ENCODE measurements at regions of chr9 and their contacts with region 1.

Region 1: GRCh38 chr9:71768388-71769174 is at the start of gene CEMIP2:
- DNase-seq: peak; percentile 91
- ATAC-seq: peak; percentile 78
- H3K4me3 Mint-ChIP-seq: peak within 1 kb of the TSS; percentile 98
- H3K27ac Mint-ChIP-seq: peak within 1 kb of the TSS; percentile 96
- H3K4me1 Mint-ChIP-seq: peaks cover 34% of the 10 kb centered on the region
- H3K27me3 Mint-ChIP-seq: no peaks in the 10 kb centered on the region
- CTCF ChIP-seq: no peak
- total RNA-seq, gene CEMIP2: 58.7 to 63.5 TPM

Region 2: GRCh38 chr9:71270554-71270953 is 498.0 kb before region 1 on chr9:
- CTCF ChIA-PET with region 1: no interaction called
- POLR2A ChIA-PET with region 1: no interaction called
- intact Hi-C with region 1: no loop called
- DNase-seq: no peak
- ATAC-seq: no peak
- H3K4me3 Mint-ChIP-seq: no peak overlapping the region
- H3K27ac Mint-ChIP-seq: no peak overlapping the region
- H3K4me1 Mint-ChIP-seq: no peaks in the 10 kb centered on the region
- H3K27me3 Mint-ChIP-seq: peaks cover 1% of the 10 kb centered on the region
- CTCF ChIP-seq: no peak

Region 3: DNA sequence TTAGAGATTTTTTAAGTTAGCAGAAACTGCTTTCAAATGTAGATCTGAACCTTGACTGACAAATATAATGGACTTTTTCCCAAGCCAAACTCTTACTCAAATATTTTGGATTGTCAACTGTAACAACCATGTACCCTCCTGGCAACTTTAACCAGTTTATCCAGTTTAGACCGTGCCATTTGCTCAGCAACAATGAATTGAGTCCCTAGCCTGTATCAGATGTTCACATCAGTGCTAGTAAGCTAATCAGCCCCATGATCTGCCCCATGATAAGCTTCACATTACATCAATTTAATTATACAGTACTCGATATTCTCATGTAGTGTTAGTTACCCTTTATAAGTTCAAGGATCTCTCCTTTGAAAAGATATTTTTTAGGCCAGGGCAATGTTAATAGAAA is 370.7 kb before region 1 on chr9:
- CTCF ChIA-PET with region 1: no interaction called
- POLR2A ChIA-PET with region 1: no interaction called
- intact Hi-C with region 1: no loop called
- DNase-seq: no peak
- ATAC-seq: no peak
- H3K4me3 Mint-ChIP-seq: no peak overlapping the region
- H3K27ac Mint-ChIP-seq: no peak overlapping the region
- H3K4me1 Mint-ChIP-seq: no peaks in the 10 kb centered on the region
- H3K27me3 Mint-ChIP-seq: peaks cover 1% of the 10 kb centered on the region
- CTCF ChIP-seq: no peak

Region 4: DNA sequence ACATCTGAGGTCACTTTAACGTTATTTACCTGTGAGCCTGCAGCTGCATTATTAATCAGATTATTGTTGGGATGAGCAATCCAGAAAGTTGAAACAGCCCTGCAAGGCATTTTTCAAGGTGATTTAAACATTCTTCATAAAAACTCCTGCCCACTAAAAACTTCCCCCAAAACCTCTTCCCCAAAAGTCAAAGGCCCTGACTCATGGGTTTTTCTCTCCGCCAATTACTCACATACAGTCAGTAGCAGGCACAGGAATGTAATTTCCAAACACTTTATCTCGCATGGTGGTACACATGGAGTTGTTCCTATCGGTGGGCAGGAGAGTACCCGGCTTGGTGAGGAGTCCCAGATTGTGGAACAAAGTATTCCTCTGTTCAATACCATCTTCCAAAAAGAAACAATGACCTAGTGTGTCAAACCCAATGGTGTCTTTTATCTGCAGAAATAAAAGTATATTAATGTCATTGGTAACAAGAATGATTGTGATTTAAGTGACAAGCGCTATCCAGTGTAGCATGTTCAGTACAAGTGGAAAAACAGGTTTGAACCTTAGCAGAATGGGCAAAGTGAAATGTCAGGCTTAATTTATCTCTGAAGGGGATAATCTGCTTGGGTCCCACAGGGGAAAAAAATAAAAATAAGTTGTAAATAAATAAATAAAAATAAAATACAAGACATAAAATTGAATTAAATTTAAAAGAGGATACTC is 38.6 kb before region 1 on chr9:
- CTCF ChIA-PET with region 1: interaction called, 5 read pairs
- POLR2A ChIA-PET with region 1: no interaction called
- intact Hi-C with region 1: loop called (anchors 5 kb)
- DNase-seq: no peak
- ATAC-seq: no peak
- H3K4me3 Mint-ChIP-seq: no peak overlapping the region
- H3K27ac Mint-ChIP-seq: no peak overlapping the region
- H3K4me1 Mint-ChIP-seq: peaks cover 4% of the 10 kb centered on the region
- H3K27me3 Mint-ChIP-seq: no peaks in the 10 kb centered on the region
- CTCF ChIP-seq: no peak

Region 5: GRCh38 chr9:71783120-71783530 is 14.5 kb after region 1 on chr9:
- CTCF ChIA-PET with region 1: interaction called, 19 read pairs
- POLR2A ChIA-PET with region 1: interaction called, 69 read pairs
- intact Hi-C with region 1: no loop called
- DNase-seq: peak; percentile 94
- ATAC-seq: peak; percentile 91
- H3K4me3 Mint-ChIP-seq: peak overlapping the region; percentile 58
- H3K27ac Mint-ChIP-seq: peak overlapping the region; percentile 97
- H3K4me1 Mint-ChIP-seq: peaks cover 51% of the 10 kb centered on the region
- H3K27me3 Mint-ChIP-seq: no peaks in the 10 kb centered on the region
- CTCF ChIP-seq: no peak